ENCODE measurements at regions of chr6 and their contacts with region 1.

Region 1: GRCh38 chr6:144349690-144350527 is 64.8 kb downstream of the UTRN start:
- DNase-seq: no peak
- H3K4me3 ChIP-seq: no peak overlapping the region
- H3K27ac ChIP-seq: peak overlapping the region; percentile 45
- H3K4me1 ChIP-seq: no peaks in the 10 kb centered on the region
- H3K27me3 ChIP-seq: no peaks in the 10 kb centered on the region
- CTCF ChIP-seq: no peak

Region 2: GRCh38 chr6:144162977-144163376 is 186.9 kb before region 1 on chr6:
- intact Hi-C with region 1: no loop called
- DNase-seq: no peak
- H3K4me3 ChIP-seq: no peak overlapping the region
- H3K27ac ChIP-seq: no peak overlapping the region
- H3K4me1 ChIP-seq: no peaks in the 10 kb centered on the region
- H3K27me3 ChIP-seq: no peaks in the 10 kb centered on the region
- CTCF ChIP-seq: no peak

Region 3: DNA sequence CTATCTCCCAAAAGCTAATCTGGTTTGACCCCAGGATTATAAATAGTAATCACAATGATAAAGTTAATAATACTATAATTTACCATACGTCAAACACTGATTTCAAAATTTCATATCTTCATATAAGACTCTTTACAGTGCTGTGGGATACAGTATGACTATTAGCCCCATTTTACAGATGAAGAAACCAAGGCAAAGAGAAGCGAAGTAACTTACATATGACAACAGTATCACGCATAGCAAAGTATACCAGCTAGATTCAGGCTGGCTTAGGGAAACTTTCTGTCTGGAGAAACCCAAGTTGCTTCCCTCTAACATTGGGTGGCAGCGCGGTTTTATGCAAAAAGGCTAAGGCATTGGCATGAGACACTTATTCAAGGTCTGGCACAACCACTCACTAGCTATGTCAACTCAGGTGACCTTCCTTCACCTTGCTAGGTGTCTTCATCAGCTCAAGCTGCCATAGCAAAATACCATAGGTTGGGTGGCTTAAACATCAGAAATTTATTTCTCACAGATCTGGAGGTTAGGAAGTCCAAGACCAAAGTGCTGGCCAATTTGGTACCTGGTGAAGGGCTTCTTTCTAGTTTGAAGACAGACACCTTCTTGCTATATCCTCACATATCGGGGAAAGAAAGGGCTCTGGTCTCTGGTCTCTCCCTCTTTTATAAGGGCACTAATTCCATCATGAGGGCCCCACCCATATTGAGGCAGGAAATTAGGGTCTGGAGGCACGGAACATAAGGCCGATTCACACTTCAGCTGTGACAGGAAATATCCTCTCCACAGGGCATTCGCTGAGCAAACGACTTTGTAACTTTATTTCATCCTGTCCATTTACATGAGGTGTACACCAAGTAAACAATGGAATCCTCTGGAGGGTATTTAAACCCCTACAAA is 87.2 kb before region 1 on chr6:
- intact Hi-C with region 1: no loop called
- DNase-seq: peak; percentile 27
- H3K4me3 ChIP-seq: no peak overlapping the region
- H3K27ac ChIP-seq: no peak overlapping the region
- H3K4me1 ChIP-seq: no peaks in the 10 kb centered on the region
- H3K27me3 ChIP-seq: no peaks in the 10 kb centered on the region
- CTCF ChIP-seq: peak; percentile 15

Region 4: GRCh38 chr6:144411332-144412190 is 61.7 kb after region 1 on chr6:
- intact Hi-C with region 1: loop called (anchors 10 kb)
- DNase-seq: no peak
- H3K4me3 ChIP-seq: no peak overlapping the region
- H3K27ac ChIP-seq: no peak overlapping the region
- H3K4me1 ChIP-seq: peaks cover 12% of the 10 kb centered on the region
- H3K27me3 ChIP-seq: no peaks in the 10 kb centered on the region
- CTCF ChIP-seq: no peak